Panc1 (cell line): ENCODE measurements at regions of chr6 and their contacts with region 1.

Region 1: DNA sequence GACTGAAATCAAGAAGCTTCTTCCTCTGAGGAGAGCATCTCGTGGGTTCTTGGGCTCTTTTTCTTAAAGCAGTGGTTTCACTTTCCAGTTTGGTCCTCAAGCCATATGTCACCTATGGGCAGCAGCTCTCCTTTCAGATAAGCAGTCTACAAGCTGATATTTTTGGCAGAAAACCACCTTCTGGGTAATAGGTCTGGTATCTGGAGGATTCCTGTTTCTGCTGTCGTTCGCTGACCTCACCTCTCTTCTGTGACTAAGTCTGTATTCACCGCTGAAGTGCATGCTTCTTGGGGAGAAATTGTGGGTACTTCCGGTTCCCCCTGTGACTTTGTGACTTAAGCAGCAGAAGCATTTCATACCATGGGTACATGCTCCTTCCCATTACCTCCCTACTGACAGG is 193.6 kb downstream of the EDN1 start:
- DNase-seq: peak; percentile 72
- ATAC-seq: peak; percentile 91
- H3K4me3 ChIP-seq: peak overlapping the region in 1 of 2 experiments; percentile 17; a peak in 2 of 4 replicates
- H3K27ac ChIP-seq: peak overlapping the region; percentile 72
- H3K4me1 ChIP-seq: peaks cover 8% of the 10 kb centered on the region; the same call in 1 of the 2 replicates
- H3K27me3 ChIP-seq: no peaks in the 10 kb centered on the region
- CTCF ChIP-seq: no peak

Region 2: GRCh38 chr6:12327391-12327790 is 156.3 kb before region 1 on chr6:
- CTCF ChIA-PET with region 1: no interaction called
- POLR2A ChIA-PET with region 1: no interaction called
- in situ Hi-C with region 1: loop called (anchors 10 kb)
- intact Hi-C with region 1: no loop called
- DNase-seq: no peak
- ATAC-seq: peak; percentile 61; the same call in 1 of the 2 replicates
- H3K4me3 ChIP-seq: no peak overlapping the region
- H3K27ac ChIP-seq: peak overlapping the region; percentile 88
- H3K4me1 ChIP-seq: peaks cover 31% of the 10 kb centered on the region
- H3K27me3 ChIP-seq: no peaks in the 10 kb centered on the region
- CTCF ChIP-seq: no peak